ENCODE measurements at regions of chr20 and their contacts with region 1.

Region 1: DNA sequence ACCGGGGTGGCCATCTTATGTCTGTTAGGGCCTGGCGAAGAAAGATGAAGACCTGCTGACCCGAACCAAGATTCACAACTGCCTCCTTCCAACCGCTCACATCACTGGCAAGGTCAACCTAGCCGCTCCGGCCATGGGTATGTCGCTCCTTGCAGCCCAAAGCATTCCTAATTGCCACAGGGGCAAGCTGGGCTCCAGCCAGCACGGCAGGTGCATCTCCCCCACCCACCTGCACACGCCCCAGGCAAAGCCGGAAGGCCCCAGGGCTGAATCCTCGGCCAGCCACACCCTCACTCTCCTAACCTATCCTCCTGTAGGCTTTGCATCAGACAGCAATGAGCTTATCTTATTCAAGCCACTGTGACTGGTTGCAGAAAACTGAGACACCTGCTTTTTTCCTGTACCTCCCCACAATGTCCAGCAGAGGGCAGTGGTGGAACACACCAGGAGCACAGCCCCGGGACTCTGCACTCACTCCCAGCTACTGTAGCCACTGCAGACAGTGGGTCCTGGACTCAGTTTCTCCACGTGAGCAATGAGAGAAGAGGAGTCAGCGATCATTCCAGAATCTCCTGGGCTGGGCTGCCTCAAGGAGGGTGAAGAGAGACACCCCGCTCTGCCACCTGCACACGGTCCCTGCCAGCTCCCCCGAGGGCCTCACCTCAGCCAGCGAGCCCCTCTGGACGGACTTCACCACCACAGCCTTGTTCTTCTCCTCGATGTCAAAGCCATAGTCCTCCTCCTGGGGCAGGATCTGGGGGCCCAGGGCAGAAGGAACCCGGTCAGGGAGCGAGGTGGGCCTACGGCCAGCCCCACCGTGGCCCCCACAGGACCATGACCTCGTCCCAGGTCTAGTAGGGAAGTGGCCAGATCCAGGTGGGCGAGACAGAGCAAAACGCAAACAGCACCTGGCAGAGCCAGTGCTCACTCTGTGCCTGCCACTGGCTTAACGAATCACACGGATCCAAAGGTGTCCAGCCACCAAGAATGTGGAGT is 170.0 kb downstream of the PREX1 start:
- DNase-seq: peak in 2 of 3 donors; percentile 59 to 68
- ATAC-seq: peak; percentile 96
- H3K4me3 ChIP-seq: no peak overlapping the region
- H3K4me1 ChIP-seq: no peaks in the 10 kb centered on the region
- CTCF ChIP-seq: peak; percentile 84

Region 2: GRCh38 chr20:48545015-48545718 is 112.6 kb before region 1 on chr20:
- intact Hi-C with region 1: no loop called
- DNase-seq: peak in 1 of 3 donors; percentile 59
- ATAC-seq: peak; percentile 49
- H3K4me3 ChIP-seq: no peak overlapping the region
- H3K4me1 ChIP-seq: no peaks in the 10 kb centered on the region
- CTCF ChIP-seq: no peak

Region 3: DNA sequence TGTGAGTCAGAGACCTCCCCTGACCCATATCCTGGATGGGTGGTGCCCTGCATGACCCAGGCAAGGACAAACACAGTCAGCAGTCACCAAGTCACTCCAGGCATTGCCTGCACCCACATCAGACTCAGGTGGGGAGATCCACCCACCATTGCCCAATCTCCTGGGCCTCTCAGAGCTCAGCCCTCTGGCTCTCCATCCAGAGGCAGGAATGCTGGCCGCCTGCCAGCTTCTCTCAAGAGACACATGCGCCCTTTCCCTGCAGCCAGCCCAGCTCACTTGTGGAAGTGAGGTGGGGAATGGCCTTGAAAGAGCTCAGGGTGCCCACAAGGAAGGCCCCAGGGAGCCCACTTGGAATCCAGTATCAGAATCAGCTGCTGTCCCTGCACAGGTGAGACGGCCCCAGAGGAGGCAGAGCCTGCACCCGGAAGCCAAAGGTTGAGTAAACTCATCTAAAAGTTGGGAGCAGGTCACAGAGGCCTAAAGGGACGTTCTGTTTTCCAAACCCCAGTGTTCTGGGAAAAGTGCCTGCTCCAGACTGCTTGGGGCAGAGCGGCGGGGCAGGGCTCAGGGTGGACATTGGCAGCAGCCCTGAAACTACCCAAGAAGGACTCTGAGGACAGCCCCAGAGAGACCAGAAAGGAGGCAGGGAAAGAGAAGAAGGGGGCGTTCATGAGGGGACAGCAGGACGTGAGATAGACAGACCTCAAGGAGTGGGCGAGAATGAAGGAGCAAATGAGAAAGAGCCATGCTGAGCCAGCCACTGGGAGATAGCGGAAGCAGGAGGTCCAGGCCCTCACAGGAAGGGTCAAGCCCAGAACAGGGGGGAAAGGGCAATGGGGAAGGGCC is 40.3 kb after region 1 on chr20:
- intact Hi-C with region 1: no loop called
- DNase-seq: peak in 2 of 3 donors; percentile 61 to 68
- ATAC-seq: peak; percentile 69
- H3K4me3 ChIP-seq: no peak overlapping the region
- H3K4me1 ChIP-seq: peaks cover 7% of the 10 kb centered on the region
- CTCF ChIP-seq: no peak

Region 4: DNA sequence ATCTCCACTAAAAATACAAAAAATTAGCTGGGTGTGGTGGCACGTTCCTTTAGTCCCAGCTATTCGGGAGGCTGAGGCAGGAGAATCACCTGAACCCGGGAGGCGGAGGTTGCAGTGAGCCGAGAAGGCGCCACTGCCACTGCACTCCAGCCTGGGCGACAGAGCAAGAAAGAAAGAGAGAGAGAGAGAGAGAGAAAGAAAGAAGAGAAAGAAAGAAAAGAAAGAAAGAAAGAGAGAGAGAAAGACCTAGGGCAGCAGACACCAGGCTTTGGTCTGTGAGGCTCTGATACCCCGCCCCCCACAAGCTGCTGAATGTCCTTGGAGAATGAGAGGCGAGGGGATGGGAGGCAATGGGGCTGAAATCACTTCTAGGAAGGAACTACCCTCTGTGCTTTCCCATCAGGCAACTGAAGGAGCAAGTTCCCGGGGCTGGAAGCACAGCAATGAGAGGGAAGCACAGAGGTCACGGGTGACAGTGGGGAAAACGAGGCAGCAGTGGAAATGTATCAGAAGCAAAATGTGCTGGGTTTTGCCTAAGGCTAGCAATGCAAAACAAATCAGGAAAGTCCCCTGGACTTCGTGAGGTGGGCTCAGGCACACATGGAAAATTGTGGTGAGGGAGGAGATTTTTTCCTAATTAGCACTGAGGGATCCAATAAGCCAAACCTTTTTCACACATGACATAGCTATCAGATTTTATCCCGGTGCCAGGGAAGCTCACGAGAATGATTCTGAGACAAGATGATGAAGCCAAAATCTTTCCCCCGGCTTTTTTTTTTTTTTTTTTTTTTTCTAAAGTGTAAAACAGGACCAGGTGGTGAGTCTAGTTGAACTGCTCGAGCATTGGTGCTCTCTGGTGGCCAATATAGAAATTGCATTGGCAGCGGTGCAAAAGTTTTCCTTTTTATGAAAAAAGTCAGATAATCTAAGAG is 246.9 kb after region 1 on chr20:
- intact Hi-C with region 1: loop called (anchors 5 kb)
- DNase-seq: peak in 2 of 3 donors; percentile 51 to 80
- ATAC-seq: peak; percentile 78
- H3K4me3 ChIP-seq: no peak overlapping the region
- H3K4me1 ChIP-seq: peaks cover 5% of the 10 kb centered on the region
- CTCF ChIP-seq: peak; percentile 77